Right ventricle myocardium inferior (tissue), 1 donor: ENCODE measurements at regions of chr1 and their contacts with region 1.

Region 1: GRCh38 chr1:27154991-27155781 is at the start of gene SLC9A1:
- DNase-seq: peak; percentile 99
- ATAC-seq: peak; percentile 85
- total RNA-seq, gene SLC9A1: 20.2 TPM

Region 2: DNA sequence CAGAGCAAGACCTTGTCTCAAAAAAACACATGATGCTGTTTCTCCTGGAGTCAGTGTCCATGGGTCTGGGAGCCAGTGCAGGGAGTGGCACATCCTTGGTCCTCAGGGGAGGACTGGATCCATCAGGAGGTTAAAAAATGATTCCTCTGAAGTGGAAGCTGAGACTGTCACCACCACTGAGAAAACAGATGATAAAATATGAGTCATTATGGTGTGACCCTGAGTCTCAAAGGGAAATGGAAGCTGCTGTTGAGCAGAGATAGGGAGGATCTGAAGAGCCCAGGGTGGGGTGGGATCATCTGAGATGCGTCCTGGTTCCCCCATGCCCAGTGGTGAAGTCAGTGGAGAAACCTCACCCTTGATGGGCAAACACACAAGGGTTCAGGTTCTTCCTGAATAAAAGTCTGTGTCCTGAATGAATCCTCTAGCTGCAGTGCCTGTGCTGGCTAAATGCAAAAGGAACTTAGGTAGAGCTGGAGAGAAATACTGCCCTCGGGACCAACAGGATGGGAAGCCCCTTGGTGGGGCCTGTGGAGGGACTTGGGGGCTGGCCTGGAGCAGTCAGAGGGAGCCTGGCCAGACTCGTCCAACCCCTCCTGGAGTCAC is 80.9 kb before region 1 on chr1:
- intact Hi-C with region 1: no loop called
- DNase-seq: no peak
- ATAC-seq: no peak

Region 3: GRCh38 chr1:27111626-27112573 is 43.3 kb before region 1 on chr1:
- intact Hi-C with region 1: loop called (anchors 1 kb)
- DNase-seq: peak; percentile 89
- ATAC-seq: peak; percentile 81

Region 4: GRCh38 chr1:27133991-27134390 is 21.2 kb before region 1 on chr1:
- intact Hi-C with region 1: loop called (anchors 2 kb)
- DNase-seq: no peak
- ATAC-seq: no peak

Region 5: GRCh38 chr1:27235827-27236226 is 80.6 kb after region 1 on chr1:
- intact Hi-C with region 1: loop called (anchors 5 kb)
- DNase-seq: no peak
- ATAC-seq: no peak

Region 6: GRCh38 chr1:27402349-27402754 is 247.2 kb after region 1 on chr1:
- intact Hi-C with region 1: no loop called
- DNase-seq: peak; percentile 83
- ATAC-seq: peak; percentile 49